Left cardiac atrium (tissue), 4 donors: ENCODE measurements at regions of chr5 and their contacts with region 1.

Region 1: DNA sequence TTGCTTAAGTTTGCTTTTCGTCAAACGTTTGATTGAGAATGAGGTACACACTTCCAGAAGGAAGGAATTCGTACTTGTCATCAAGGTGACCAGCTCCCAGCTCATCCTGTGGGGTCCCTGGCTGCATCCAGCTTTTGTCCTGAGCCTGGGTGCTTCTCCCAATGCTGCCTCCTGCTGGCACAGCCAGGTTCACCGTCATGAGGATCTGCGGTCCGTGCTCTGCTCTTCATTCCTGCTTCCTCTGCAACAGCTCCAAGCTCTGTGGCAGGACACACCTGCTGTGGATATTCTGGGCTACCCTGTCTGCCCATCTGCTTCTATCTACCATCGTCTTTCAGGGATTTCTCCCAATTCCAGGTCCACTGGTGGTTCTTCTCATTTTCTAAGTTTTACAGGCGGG is 13.3 kb upstream of the UBE2QL1 start:
- DNase-seq: no peak
- ATAC-seq: no peak

Region 2: DNA sequence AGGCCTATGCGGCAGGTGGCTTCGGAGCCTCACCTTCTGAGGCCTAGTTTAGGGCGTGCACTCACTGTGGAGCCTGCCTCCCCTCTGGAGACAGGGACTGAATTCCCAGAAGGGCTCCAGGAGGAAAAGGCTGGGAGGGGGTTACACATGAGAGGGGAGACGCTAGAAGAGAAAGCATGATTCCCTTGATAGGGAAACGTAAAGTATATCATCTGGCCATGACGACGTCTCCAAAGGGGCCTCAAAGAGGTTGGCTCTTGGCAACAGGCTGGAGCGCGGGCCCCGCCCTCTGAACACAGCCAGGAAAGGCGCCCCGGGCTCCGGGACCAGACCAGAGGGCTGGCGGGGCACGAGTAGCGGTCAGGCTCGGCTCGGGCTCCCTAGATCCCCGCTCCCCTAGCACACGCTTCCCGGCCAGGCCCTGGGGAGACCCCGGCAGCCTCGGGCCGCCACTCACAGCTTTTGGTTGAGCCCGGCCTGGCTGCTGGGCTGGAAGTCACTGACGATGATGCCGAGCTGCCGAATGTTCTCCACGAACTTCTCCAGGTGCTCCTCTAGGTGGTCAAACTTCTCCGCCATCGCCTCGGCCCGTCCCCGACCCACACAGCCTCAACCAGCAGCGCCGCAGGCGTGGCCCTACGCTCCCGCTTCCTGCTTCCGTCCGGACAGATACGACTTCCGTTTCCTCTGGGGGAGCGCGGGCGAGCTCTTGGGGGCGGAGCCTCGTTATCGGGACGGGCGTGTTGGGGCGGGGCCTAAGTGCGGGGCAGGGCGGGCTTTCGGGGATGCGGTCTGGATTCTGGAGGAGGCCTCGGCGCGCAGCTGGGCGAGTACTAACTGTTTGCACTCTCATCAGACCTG is 57.2 kb before region 1 on chr5 and contains the start of gene MED10:
- intact Hi-C with region 1: loop called in 1 of 2 experiments (anchors 5 kb)
- DNase-seq: peak; percentile 97
- ATAC-seq: peak; percentile 99 to 100
- total RNA-seq, gene MED10: 24.4 to 24.5 TPM

Region 3: DNA sequence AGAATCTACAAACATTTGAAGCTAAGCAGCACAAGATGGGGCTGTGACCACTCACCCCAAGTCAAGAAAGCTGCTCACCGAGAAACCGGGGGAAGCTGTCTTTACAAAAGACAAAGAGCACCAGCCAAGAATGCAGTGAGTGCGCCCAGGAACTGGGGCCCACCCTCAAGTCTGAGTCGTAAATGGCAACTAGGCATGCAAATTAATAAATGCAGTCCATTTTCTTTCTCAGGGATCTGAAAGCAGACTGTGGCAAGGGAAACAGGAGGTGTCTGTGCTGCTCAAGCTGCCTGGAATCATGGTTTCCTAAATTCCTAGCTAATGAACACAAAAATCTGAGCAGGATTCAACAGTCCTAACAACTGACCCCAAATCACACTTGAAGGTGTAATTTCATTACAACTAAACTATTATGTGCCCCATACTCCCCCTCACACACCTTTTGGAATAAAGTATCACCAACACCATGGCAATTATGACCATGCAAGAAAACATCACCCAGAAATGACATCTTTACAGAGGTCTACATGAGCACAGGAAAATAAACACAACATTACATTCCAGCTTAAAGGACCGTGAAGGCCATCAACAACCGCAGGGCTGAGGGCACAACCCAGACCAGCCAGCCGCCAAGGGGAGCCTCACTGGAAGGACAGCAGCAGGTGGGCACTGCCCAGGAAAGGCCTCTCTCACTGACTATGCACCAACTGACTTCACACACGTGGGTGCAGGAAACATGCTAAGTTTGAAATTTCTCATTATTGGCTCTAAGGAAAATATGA is 179.9 kb after region 1 on chr5:
- intact Hi-C with region 1: no loop called
- DNase-seq: no peak
- ATAC-seq: no peak